ENCODE measurements at regions of chr2 and their contacts with region 1.

Region 1: DNA sequence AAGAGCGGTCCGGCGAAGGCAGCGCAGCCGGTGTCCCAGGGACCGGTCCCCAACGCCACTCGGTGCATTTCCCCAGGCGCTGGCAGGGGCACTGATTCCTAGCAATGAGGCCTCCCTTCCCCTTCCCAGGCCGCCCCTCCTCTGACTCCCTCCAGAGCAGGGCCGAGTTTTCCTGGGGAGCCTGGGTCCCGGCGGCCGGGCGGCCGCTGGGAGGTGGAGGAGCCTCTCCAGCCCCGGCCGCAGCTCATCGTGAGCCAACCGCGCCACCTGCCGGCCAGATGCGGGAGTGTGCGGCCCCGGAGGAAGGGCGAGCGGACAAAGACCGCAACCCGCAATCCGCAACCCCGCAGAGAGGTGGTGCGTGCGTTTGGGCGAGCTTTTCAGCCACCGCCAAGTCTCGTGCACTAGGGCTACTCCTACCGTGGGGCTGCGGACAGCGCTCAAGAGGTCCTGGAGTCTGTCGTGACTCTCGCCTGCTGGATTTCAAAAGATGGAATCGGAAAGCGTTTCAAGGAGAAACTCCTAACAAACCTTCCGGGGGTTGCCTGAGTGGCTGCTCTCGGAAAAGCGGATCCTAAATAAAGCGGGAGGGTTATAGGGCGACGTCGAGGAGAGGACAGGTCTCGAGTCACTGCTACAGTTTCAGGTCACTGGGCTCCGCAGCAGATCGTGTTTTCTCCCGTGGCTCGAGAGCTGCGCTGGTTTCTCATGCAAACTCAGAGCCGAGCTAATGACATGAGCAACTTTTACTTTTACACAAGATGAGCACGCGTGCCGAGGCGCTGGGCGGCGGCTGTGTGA is 1.5 kb upstream of the EPHA4 start:
- DNase-seq: peak; percentile 86
- CTCF ChIP-seq: peak; percentile 95

Region 2: DNA sequence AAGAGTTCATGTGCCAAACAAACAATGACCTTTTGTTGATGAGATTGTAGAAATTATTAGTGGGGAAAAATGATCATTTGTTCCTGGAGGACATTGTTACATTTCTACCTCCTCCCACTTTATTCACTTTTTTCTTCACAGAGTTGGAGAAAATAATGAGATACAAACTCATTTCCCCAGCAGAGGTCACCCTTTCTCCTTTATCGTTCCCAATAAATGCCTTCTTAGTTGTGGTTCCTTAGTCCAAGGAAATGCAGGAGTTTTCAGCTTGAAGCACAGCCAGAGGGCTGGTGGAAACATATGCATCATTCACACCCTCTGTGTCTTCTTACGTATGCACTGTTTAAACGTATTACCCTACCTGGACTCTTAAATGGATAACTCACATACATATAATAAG is 1837.4 kb before region 1 on chr2:
- CTCF ChIA-PET with region 1: interaction called, 17 read pairs
- POLR2A ChIA-PET with region 1: no interaction called
- DNase-seq: peak; percentile 25
- CTCF ChIP-seq: peak; percentile 52

Region 3: DNA sequence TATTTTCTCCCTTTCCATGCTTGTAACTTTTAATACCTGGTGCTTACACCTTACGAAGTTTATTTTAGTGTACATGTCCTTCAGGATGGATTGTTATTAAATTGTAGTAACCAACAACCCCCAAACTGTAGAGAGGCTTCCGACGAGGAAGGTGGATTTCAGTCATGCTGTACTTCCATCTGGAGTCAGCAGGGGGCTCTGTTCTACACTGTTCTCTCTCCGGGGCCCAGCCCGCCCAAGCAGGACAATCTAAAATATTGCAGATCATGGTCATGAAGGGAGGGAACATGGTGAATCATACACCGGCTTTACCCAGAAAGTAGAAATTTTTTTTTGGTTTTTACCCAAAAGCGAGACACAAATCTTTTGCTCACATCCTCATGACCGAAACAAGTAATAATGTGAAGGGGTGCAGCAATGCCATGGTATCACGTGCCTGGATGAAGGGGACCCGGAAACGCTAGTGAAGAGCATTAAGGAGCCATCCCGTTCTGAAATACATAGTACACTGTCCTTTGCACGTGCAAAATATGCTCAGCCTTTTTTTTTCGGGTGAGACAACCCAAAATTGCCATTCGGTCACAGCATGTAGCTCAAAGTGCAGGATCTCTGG is 886.3 kb before region 1 on chr2:
- CTCF ChIA-PET with region 1: interaction called, 19 read pairs
- POLR2A ChIA-PET with region 1: no interaction called
- DNase-seq: peak; percentile 41
- CTCF ChIP-seq: peak; percentile 64

Region 4: GRCh38 chr2:221554769-221555493 is 18.7 kb before region 1 on chr2:
- CTCF ChIA-PET with region 1: interaction called, 22 read pairs
- POLR2A ChIA-PET with region 1: no interaction called
- DNase-seq: peak; percentile 40
- CTCF ChIP-seq: no peak

Region 5: GRCh38 chr2:221563270-221563985 is 10.2 kb before region 1 on chr2:
- CTCF ChIA-PET with region 1: interaction called, 18 read pairs
- POLR2A ChIA-PET with region 1: no interaction called
- DNase-seq: no peak
- CTCF ChIP-seq: no peak

Region 6: GRCh38 chr2:221590861-221591365 is 17.3 kb after region 1 on chr2:
- CTCF ChIA-PET with region 1: interaction called, 10 read pairs
- POLR2A ChIA-PET with region 1: no interaction called
- DNase-seq: no peak
- CTCF ChIP-seq: no peak

Region 7: GRCh38 chr2:221836095-221836494 is 262.5 kb after region 1 on chr2:
- CTCF ChIA-PET with region 1: no interaction called
- POLR2A ChIA-PET with region 1: no interaction called
- DNase-seq: no peak
- CTCF ChIP-seq: no peak

Measured in GM10248 (cell line).